ENCODE measurements at regions of chr7 and their contacts with region 1.

Region 1: GRCh38 chr7:116736927-116737715 is 65.1 kb downstream of the MET start:
- DNase-seq: peak; percentile 90
- H3K4me3 ChIP-seq: peak overlapping the region in 1 of 3 experiments; percentile 19
- H3K27ac ChIP-seq: peak overlapping the region; percentile 58
- H3K4me1 ChIP-seq: peaks cover 40% of the 10 kb centered on the region
- H3K27me3 ChIP-seq: no peaks in the 10 kb centered on the region
- CTCF ChIP-seq: no peak
- POLR2A ChIP-seq: no peak

Region 2: GRCh38 chr7:116715077-116715476 is 22.0 kb before region 1 on chr7:
- CTCF ChIA-PET with region 1: interaction called, 11 read pairs
- POLR2A ChIA-PET with region 1: interaction called, 4 read pairs
- dilution Hi-C with region 1: no loop called
- intact Hi-C with region 1: loop called (anchors 1 kb)
- DNase-seq: no peak
- H3K4me3 ChIP-seq: no peak overlapping the region
- H3K27ac ChIP-seq: no peak overlapping the region
- H3K4me1 ChIP-seq: peaks cover 12% of the 10 kb centered on the region
- H3K27me3 ChIP-seq: no peaks in the 10 kb centered on the region
- CTCF ChIP-seq: peak in 1 of 2 donors; percentile 5
- POLR2A ChIP-seq: no peak

Region 3: DNA sequence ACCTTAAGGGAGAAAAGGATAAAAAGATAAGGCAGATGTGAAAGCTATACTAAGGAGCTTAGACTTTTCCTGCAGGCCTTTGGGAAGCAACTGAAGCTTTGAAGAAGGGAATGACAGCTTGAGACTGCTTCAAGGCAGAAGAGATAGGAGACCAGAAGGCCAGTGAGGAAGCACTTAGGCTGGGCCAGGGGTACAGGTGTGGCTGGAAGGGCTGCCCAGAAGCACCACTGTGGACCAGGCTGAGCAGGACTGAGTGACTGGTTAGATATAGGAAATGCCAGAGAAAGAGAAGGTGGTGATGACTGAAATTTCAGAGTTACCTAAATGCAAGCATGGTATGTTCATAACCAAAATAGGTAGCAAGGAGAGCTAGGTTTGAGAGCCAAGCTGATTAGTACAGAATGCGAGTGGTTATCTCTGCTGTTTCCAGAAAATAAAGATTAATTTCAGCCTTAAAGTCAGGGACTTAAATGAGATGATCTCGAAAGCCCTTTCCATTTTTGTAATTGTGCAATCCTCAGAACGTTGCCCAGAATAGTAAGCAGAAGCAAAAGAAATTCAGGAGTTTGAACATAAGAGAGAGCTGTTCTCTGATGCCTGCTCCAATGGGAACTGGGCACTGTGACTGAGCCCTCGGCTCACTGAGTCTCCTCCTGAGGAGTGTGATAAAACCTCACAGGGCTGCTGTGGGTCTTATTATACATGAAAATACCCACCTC is 10.2 kb before region 1 on chr7:
- CTCF ChIA-PET with region 1: interaction called, 13 read pairs
- POLR2A ChIA-PET with region 1: interaction called, 5 read pairs
- dilution Hi-C with region 1: no loop called
- intact Hi-C with region 1: no loop called
- DNase-seq: no peak
- H3K4me3 ChIP-seq: no peak overlapping the region
- H3K27ac ChIP-seq: no peak overlapping the region
- H3K4me1 ChIP-seq: peaks cover 17% of the 10 kb centered on the region
- H3K27me3 ChIP-seq: no peaks in the 10 kb centered on the region
- CTCF ChIP-seq: no peak
- POLR2A ChIP-seq: no peak

Region 4: GRCh38 chr7:116786791-116787443 is 49.8 kb after region 1 on chr7:
- CTCF ChIA-PET with region 1: interaction called, 15 read pairs
- POLR2A ChIA-PET with region 1: no interaction called
- dilution Hi-C with region 1: no loop called
- intact Hi-C with region 1: no loop called
- DNase-seq: peak; percentile 76
- H3K4me3 ChIP-seq: no peak overlapping the region
- H3K27ac ChIP-seq: no peak overlapping the region
- H3K4me1 ChIP-seq: peaks cover 7% of the 10 kb centered on the region
- H3K27me3 ChIP-seq: no peaks in the 10 kb centered on the region
- CTCF ChIP-seq: peak; percentile 33 to 45
- POLR2A ChIP-seq: no peak

Region 5: DNA sequence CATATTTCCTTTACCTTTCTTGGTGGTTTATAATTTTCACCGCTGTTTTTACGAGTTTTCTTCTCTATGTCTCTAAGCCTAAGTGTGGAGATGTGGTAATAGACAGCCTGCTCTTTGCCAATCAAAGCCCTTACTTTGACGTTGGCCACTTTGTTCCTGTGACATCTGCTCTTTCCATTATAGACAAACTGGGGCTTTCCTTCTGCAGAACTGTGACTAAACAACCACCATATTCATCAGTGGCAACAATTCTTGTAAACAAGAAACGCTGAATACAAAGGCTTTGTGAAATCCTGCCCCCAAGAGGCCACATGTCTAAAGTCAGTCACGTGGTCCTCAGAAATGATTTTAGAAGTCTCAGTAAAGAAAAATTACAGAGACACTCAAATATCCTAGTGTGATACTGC is 65.6 kb after region 1 on chr7:
- CTCF ChIA-PET with region 1: no interaction called
- POLR2A ChIA-PET with region 1: no interaction called
- dilution Hi-C with region 1: no loop called
- intact Hi-C with region 1: loop called (anchors 2 kb)
- DNase-seq: peak; percentile 75
- H3K4me3 ChIP-seq: no peak overlapping the region
- H3K27ac ChIP-seq: no peak overlapping the region
- H3K4me1 ChIP-seq: peaks cover 14% of the 10 kb centered on the region
- H3K27me3 ChIP-seq: no peaks in the 10 kb centered on the region
- CTCF ChIP-seq: peak; percentile 40 to 46
- POLR2A ChIP-seq: no peak

Region 6: DNA sequence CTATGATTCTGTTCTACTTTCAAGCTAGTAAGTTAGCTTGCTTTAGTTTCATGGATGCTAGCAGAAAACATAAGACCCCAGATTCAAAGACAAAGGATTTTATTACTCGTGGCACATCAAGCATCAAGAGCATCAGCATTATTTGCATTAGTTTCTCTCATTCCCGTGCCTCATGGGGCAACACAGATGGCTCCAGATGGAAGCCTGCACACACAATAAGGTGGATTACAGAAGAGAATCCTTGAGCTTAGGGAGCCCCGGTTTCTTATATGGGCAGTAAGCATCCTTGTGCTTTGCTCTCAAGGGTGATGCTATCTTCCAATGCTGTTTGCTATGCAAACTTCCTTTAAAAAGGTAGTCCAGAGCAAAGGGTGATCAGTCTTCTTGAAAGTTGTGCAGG is 114.5 kb after region 1 on chr7:
- CTCF ChIA-PET with region 1: no interaction called
- POLR2A ChIA-PET with region 1: no interaction called
- dilution Hi-C with region 1: no loop called
- intact Hi-C with region 1: no loop called
- DNase-seq: no peak
- H3K4me3 ChIP-seq: no peak overlapping the region
- H3K27ac ChIP-seq: no peak overlapping the region
- H3K4me1 ChIP-seq: no peaks in the 10 kb centered on the region
- H3K27me3 ChIP-seq: no peaks in the 10 kb centered on the region
- CTCF ChIP-seq: no peak
- POLR2A ChIP-seq: no peak